WTC11 (cell line): ENCODE measurements at regions of chr7 and their contacts with region 1.

Region 1: DNA sequence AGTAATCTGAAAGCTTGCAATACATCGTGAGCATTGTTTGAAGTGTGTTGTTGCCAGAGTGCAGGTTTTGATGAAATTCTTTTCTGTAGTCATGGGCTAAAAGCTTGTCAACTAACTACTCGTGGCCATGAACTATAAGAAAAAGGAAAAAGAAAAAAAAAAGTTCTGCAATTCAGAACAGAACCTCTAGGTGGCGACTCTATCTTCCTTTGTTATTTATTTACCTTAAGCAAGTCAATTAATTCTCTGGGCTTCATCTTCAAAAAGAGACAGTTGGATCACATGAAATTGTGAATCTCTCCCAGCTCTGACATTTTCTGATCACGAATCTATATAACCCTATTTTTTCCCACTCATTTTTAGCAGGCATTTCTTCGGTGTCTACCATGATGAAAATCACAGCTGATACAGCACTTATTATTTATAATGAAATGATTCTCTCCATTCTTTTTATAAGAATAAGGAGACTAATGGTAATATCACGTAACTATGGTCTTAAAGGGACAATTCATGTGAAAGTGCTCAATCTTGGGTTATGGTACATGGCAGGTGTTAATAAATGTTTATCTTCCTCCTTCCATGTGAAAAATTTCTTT is 18.8 kb downstream of the TMEM196 start:
- DNase-seq: no peak
- ATAC-seq: no peak
- H3K4me3 Mint-ChIP-seq: no peak overlapping the region
- H3K27ac Mint-ChIP-seq: no peak overlapping the region
- H3K4me1 Mint-ChIP-seq: 0 out of 2 replicates have a peak, but pooled peaks cover 2% of the 10 kb centered on the region
- H3K27me3 Mint-ChIP-seq: no peaks in the 10 kb centered on the region
- CTCF ChIP-seq: peak; percentile 91

Region 2: GRCh38 chr7:19508124-19508523 is 246.5 kb before region 1 on chr7:
- CTCF ChIA-PET with region 1: no interaction called
- POLR2A ChIA-PET with region 1: no interaction called
- DNase-seq: no peak
- ATAC-seq: no peak
- H3K4me3 Mint-ChIP-seq: no peak overlapping the region
- H3K27ac Mint-ChIP-seq: no peak overlapping the region
- H3K4me1 Mint-ChIP-seq: peaks cover 11% of the 10 kb centered on the region
- H3K27me3 Mint-ChIP-seq: no peaks in the 10 kb centered on the region
- CTCF ChIP-seq: no peak

Region 3: DNA sequence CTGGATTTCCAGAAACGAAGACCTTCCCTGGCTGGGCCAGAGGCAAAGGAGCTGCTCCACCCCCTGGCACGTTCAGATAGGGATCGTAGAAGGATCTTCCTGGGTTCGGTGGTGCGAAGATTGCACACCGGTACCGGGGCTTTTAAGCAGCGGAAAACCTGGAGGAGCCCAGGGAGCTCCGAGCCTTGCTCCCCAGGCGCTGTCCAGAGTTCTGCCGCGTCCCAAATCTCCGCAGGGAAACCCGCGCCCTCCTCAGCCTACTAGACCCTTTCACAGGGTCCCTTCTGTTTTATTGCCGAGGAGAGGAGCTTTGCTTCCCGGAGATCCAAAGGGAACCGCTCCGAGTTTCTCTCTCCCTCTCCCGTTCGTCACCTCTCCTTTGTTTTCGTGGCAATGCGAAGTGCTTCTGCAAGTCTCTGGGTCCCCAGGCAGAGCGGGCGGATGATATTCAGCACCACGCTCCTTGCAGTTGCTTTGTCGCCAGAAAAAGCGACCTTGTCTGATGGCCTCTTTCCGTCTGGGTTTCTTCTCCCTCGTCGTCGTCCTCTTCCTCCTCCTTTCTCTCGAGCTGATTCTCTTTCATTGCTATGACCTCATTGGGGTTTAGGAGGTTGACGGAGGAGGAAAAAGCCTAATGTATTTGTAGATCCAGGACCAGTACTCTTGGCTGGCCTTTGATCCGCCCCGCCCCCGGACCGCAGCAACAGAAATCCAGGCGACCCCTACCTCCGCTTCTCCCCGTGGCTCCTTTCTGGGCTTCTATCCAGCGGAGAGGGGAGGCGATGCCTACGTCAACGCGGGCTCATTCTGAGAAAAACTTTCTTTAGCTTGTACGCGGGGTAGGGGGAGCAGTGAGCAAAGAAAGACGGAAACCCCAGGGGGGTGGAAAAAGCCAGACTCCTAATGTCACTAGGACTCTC is 18.5 kb after region 1 on chr7 and contains the start of gene TMEM196:
- CTCF ChIA-PET with region 1: interaction called, 22 read pairs
- POLR2A ChIA-PET with region 1: no interaction called
- DNase-seq: peak; percentile 77
- ATAC-seq: peak; percentile 92
- H3K4me3 Mint-ChIP-seq: peak within 1 kb of the TSS; percentile 78
- H3K27ac Mint-ChIP-seq: no peak within 1 kb of the TSS
- H3K4me1 Mint-ChIP-seq: peaks cover 18% of the 10 kb centered on the region
- H3K27me3 Mint-ChIP-seq: peaks cover 51% of the 10 kb centered on the region
- CTCF ChIP-seq: no peak
- total RNA-seq, gene TMEM196: 0.11 to 0.42 TPM (median 0.16 TPM) in 3 replicates

Region 4: DNA sequence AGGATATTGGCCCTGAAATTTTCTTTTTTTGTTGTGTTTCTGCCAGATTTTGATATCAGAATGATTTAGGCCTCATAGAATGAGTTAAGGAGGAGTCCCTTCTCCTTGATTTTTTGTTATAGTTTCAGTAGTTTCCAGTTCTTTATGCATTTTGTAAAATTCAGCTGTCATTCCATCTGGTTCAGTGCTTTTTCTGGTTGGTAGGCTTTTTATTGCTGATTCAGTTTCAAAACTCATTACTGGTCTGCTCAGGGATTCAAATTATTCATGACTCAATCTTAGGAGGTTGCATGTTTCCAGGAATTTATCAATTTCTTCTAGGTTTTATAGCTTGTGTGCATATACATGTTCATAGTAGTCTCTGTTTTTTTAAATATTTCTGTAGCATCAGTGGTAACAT is 28.9 kb after region 1 on chr7:
- CTCF ChIA-PET with region 1: no interaction called
- POLR2A ChIA-PET with region 1: no interaction called
- DNase-seq: no peak
- ATAC-seq: no peak
- H3K4me3 Mint-ChIP-seq: no peak overlapping the region
- H3K27ac Mint-ChIP-seq: no peak overlapping the region
- H3K4me1 Mint-ChIP-seq: no peaks in the 10 kb centered on the region
- H3K27me3 Mint-ChIP-seq: peaks cover 13% of the 10 kb centered on the region
- CTCF ChIP-seq: no peak